ENCODE measurements at regions of chr7 and their contacts with region 1.

Region 1: DNA sequence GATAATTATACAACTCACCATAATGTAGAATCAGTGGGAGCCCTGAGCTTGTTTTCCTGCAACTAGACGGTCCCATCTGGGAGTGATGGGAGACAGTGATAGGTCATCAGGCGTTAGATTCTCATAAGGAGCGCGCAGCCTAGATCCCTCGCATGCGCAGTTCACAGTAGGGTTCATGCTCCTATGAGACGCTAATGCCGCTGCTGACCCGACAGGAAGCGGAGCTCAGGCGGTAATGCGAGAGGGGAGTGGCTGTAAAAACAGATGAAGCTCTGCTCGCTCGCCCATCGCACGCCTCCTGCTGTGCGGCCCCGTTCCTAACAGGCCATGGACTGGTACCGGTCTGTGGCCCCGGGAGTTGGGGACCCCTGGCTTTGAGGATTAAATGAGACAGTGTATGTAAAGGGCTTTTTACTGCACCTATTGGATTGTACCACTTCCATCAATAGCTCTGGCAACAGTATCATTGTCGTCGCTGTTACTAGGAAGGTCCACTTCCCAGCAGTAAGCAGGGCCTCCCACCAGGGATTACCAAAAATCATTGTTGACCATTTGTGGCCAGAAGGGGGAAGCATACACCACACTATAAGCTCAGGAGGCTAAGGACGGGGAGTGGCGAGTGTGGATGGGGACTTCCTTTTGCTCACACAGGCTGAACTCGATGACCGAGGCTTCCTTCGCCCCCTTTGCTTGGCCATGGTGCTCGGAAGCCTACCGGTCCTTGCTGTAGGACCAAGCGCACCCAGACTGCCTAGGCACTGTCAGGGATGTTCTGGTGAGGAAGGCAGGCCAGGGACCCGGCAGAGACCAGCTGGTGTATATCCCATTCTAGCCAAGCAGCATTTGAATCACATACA is 26.4 kb downstream of the AKR1B1 start:
- DNase-seq: peak in 1 of 2 donors; percentile 93
- H3K4me3 ChIP-seq: peak overlapping the region; percentile 28 to 44
- H3K27ac ChIP-seq: peak overlapping the region; percentile 73
- H3K4me1 ChIP-seq: peaks cover 15% of the 10 kb centered on the region
- H3K27me3 ChIP-seq: no peaks in the 10 kb centered on the region
- CTCF ChIP-seq: peak; percentile 82 to 90 (median 89)
- POLR2A ChIP-seq: peak in 1 of 2 donors; percentile 33

Region 2: DNA sequence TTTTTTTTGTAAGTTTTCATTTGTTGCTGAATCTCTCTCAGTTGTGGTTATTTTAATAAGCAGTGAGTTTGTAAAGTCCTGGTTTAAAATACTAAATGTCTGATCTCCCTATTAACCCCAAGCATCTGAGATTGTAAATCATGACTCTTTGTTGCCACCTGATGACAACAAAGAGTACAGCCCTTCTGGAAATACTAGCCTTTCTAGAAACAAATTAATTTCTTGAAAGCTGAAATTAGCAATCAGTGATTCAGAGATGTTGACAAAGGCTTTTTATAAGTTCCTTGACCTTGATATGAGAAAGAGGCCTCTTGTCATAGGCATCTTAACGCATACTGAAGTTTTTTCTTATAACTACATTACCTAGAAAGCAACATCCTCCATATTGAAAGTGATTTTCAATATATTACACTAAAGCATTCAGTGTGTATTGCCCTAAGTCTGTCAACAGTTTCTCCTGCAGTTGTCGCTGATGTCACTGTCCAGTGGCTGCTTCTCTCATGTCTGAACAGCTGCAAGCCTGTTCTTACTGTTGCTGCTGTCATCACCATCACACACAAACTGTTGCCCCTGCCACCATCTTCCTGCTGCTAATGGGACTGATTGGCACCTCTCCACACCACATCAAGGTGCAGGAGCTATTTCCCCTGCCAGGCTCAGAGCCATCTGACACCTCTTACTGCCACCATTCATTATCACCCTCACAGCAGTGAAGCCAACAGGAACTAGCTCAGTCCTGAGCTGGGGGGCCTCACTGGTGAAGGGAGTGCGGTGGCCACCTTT is 400.5 kb before region 1 on chr7:
- intact Hi-C with region 1: no loop called
- DNase-seq: no peak
- H3K4me3 ChIP-seq: no peak overlapping the region
- H3K27ac ChIP-seq: no peak overlapping the region
- H3K4me1 ChIP-seq: no peaks in the 10 kb centered on the region
- H3K27me3 ChIP-seq: no peaks in the 10 kb centered on the region
- CTCF ChIP-seq: no peak
- POLR2A ChIP-seq: no peak

Region 3: GRCh38 chr7:134378562-134378961 is 54.0 kb before region 1 on chr7:
- intact Hi-C with region 1: no loop called
- DNase-seq: no peak
- H3K4me3 ChIP-seq: no peak overlapping the region
- H3K27ac ChIP-seq: no peak overlapping the region
- H3K4me1 ChIP-seq: no peaks in the 10 kb centered on the region
- H3K27me3 ChIP-seq: no peaks in the 10 kb centered on the region
- CTCF ChIP-seq: no peak
- POLR2A ChIP-seq: no peak

Region 4: GRCh38 chr7:134514663-134515062 is 82.1 kb after region 1 on chr7:
- intact Hi-C with region 1: loop called (anchors 10 kb)
- DNase-seq: no peak
- H3K4me3 ChIP-seq: no peak overlapping the region
- H3K27ac ChIP-seq: no peak overlapping the region
- H3K4me1 ChIP-seq: peaks cover 19% of the 10 kb centered on the region
- H3K27me3 ChIP-seq: no peaks in the 10 kb centered on the region
- CTCF ChIP-seq: peak in 2 of 3 experiments; percentile 66 to 75
- POLR2A ChIP-seq: no peak

Region 5: GRCh38 chr7:134547397-134548054 is 115.0 kb after region 1 on chr7:
- intact Hi-C with region 1: loop called (anchors 10 kb)
- DNase-seq: no peak
- H3K4me3 ChIP-seq: peak overlapping the region; percentile 31 to 33
- H3K27ac ChIP-seq: peak overlapping the region; percentile 50
- H3K4me1 ChIP-seq: no peaks in the 10 kb centered on the region
- H3K27me3 ChIP-seq: no peaks in the 10 kb centered on the region
- CTCF ChIP-seq: peak; percentile 75 to 87 (median 84)
- POLR2A ChIP-seq: no peak